ENCODE measurements at regions of chr11 and their contacts with region 1.

Region 1: DNA sequence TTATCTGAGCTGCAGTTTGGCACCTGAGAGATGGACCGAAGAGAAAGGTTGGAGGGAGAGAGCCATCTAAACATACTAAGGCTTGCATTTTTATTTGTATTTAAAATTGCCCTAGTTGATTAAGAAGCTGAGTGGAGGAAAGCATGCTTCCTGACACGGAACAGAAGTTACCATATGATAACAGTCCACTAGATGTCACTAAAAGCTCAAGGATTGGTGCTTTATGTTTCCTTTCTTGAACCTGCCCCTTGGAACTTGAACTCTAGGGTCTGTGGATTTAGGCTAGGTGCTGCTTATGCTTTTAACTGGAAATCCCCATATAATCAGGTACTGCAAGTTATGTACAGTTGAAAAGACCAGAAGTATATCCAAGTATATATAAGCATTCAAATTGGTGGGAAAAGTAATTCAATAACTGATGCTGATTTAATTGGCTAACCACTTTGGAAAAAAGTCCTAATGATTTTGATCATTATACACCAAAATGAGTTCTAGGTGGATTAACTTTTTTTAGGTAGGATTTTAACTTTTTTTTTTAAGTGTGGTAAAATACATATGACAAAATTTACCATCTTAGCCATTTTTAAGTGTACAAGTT is 9.5 kb downstream of the RBMXL2 start:
- DNase-seq: peak; percentile 46 to 67 (median 56)
- ATAC-seq: peak; percentile 93
- H3K4me3 ChIP-seq: no peak overlapping the region
- H3K27ac ChIP-seq: no peak overlapping the region
- H3K4me1 ChIP-seq: no peaks in the 10 kb centered on the region
- H3K27me3 ChIP-seq: no peaks in the 10 kb centered on the region
- CTCF ChIP-seq: peak; percentile 63 to 87 (median 65); a peak in 5 of 6 replicates
- EP300 ChIP-seq: no peak
- POLR2A ChIP-seq: no peak
- RAD21 ChIP-seq: peak; percentile 91

Region 2: DNA sequence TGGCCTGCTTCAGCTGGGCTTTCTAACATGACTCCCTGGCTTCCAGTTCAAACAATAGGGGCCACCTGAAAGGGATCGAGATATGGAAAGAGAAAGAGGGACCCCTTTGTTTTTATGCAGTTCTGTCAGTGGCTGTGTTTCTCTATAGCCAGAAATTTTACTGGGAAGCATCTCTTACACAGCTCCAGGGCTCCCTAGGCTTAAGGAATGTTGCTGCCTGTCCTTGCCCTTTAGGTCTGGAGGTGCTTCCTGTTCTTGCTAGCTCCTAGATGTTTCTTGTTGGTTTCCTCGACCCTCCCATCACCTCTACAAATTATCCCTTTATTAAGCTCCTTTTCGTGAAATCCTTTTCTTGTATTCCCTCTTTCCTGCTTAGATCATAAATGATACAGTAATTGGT is 1046.0 kb before region 1 on chr11:
- CTCF ChIA-PET with region 1: no interaction called
- POLR2A ChIA-PET with region 1: no interaction called
- in situ Hi-C with region 1: no loop called
- intact Hi-C with region 1: no loop called
- DNase-seq: no peak
- ATAC-seq: no peak
- H3K4me3 ChIP-seq: no peak overlapping the region
- H3K27ac ChIP-seq: no peak overlapping the region
- H3K4me1 ChIP-seq: no peaks in the 10 kb centered on the region
- H3K27me3 ChIP-seq: peaks cover 0 to 3% of the 10 kb centered on the region in 2 experiments; a peak in 3 of 5 replicates
- CTCF ChIP-seq: no peak
- EP300 ChIP-seq: no peak
- POLR2A ChIP-seq: no peak
- RAD21 ChIP-seq: no peak

Region 3: DNA sequence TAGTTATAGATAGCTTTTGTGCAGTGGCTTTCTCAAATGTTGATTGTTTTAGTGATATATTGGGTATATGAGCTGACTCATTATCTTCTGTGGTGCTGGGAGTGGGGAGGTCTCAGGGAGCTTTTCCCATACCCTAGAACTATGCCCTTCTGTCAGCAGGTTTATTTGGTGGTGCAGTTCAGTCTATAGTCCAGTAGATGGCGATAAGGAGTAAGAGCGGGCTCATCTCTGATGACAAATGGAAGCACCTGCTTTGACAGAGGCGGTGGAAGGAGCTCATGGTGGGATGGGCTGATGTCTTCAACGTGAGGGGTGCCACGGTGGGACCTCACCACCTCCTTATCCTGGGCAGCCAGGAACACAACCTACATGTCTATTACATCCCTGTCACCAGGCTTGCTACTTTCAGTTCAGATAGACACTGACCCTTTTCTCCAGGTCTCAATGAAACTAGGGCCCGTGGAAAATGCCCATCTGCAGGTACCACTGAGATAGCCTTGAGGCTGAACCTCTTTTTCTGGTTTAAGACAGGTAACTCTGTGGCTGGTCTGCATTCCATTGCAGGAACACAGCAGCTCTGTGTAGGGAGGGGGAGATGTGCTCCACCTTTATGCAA is 285.8 kb before region 1 on chr11:
- CTCF ChIA-PET with region 1: no interaction called
- POLR2A ChIA-PET with region 1: no interaction called
- in situ Hi-C with region 1: no loop called
- intact Hi-C with region 1: loop called (anchors 10 kb)
- DNase-seq: peak; percentile 58 to 72 (median 61)
- ATAC-seq: peak; percentile 94
- H3K4me3 ChIP-seq: no peak overlapping the region
- H3K27ac ChIP-seq: no peak overlapping the region
- H3K4me1 ChIP-seq: no peaks in the 10 kb centered on the region
- H3K27me3 ChIP-seq: no peaks in the 10 kb centered on the region; a peak in 1 of 5 replicates
- CTCF ChIP-seq: peak; percentile 78 to 87 (median 86)
- EP300 ChIP-seq: no peak
- POLR2A ChIP-seq: no peak
- RAD21 ChIP-seq: peak; percentile 43 to 72

Region 4: GRCh38 chr11:7020183-7020917 is 78.0 kb before region 1 on chr11 and contains the starts of genes NLRP14 and ZNF214:
- CTCF ChIA-PET with region 1: no interaction called
- POLR2A ChIA-PET with region 1: no interaction called
- in situ Hi-C with region 1: no loop called
- intact Hi-C with region 1: no loop called
- DNase-seq: peak; percentile 59 to 69 (median 64)
- ATAC-seq: peak; percentile 91
- H3K4me3 ChIP-seq: peak within 1 kb of the TSS; percentile 9
- H3K27ac ChIP-seq: no peak within 1 kb of the TSS
- H3K4me1 ChIP-seq: peaks cover 0 to 11% of the 10 kb centered on the region in 2 experiments; a peak in 3 of 5 replicates
- H3K27me3 ChIP-seq: no peaks in the 10 kb centered on the region
- CTCF ChIP-seq: no peak
- EP300 ChIP-seq: no peak
- POLR2A ChIP-seq: no peak
- RAD21 ChIP-seq: no peak
- polyA plus RNA-seq, gene NLRP14: 0.27 to 0.36 TPM
- polyA plus RNA-seq, gene ZNF214: 0.06 to 0.11 TPM

Region 5: DNA sequence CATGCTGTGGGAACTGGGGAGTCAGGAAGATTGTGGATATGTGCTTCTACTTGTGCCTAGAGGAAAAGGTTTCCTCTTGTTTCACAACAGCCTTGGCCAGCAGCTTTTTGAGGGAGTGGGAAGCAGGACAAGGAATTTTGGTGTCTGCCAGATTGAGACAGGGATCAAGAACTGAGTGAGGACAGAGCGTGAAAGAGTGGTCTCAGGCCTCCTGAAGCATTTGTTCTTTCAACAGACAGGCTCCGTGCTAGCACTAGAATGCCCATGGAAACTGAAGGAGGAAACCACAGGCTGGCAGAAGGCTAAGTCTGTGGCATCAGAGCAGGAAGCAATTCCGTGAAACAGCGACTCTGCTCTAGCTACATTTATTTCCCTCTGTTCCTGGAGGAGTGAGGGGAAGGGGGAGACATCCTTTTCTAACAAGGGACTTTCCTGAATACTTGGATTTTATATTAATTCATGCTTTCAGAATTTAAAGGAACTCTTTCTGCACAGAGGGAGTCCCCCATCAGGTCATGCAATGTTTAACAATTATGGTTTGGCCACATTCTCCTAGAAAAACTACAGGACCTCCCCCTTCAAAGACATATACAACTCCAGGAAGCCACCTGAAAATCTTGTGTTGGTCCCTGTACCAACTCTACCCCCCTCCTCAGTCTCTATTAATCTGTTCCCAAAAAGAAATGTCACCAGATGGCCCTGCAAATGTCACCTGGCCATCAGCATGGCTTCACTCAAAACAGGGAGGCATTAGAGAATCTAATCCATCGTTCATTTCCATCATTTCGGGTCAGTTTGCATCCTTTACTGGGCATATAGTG is 249.5 kb after region 1 on chr11:
- CTCF ChIA-PET with region 1: no interaction called
- POLR2A ChIA-PET with region 1: no interaction called
- in situ Hi-C with region 1: no loop called
- intact Hi-C with region 1: no loop called
- DNase-seq: no peak
- ATAC-seq: no peak
- H3K4me3 ChIP-seq: no peak overlapping the region
- H3K27ac ChIP-seq: no peak overlapping the region
- H3K4me1 ChIP-seq: no peaks in the 10 kb centered on the region
- H3K27me3 ChIP-seq: no peaks in the 10 kb centered on the region; a peak in 1 of 5 replicates
- CTCF ChIP-seq: no peak
- EP300 ChIP-seq: no peak
- POLR2A ChIP-seq: no peak
- RAD21 ChIP-seq: no peak

Region 6: GRCh38 chr11:7442588-7443215 is 344.4 kb after region 1 on chr11:
- CTCF ChIA-PET with region 1: interaction called, 3 read pairs
- POLR2A ChIA-PET with region 1: no interaction called
- in situ Hi-C with region 1: loop called (anchors 10 kb)
- intact Hi-C with region 1: loop called (anchors 1 kb)
- DNase-seq: peak; percentile 59 to 75 (median 68)
- ATAC-seq: peak; percentile 93
- H3K4me3 ChIP-seq: no peak overlapping the region
- H3K27ac ChIP-seq: no peak overlapping the region
- H3K4me1 ChIP-seq: no peaks in the 10 kb centered on the region
- H3K27me3 ChIP-seq: no peaks in the 10 kb centered on the region; a peak in 1 of 5 replicates
- CTCF ChIP-seq: peak; percentile 71 to 83 (median 83)
- EP300 ChIP-seq: no peak
- POLR2A ChIP-seq: no peak
- RAD21 ChIP-seq: peak; percentile 79 to 86

Region 7: DNA sequence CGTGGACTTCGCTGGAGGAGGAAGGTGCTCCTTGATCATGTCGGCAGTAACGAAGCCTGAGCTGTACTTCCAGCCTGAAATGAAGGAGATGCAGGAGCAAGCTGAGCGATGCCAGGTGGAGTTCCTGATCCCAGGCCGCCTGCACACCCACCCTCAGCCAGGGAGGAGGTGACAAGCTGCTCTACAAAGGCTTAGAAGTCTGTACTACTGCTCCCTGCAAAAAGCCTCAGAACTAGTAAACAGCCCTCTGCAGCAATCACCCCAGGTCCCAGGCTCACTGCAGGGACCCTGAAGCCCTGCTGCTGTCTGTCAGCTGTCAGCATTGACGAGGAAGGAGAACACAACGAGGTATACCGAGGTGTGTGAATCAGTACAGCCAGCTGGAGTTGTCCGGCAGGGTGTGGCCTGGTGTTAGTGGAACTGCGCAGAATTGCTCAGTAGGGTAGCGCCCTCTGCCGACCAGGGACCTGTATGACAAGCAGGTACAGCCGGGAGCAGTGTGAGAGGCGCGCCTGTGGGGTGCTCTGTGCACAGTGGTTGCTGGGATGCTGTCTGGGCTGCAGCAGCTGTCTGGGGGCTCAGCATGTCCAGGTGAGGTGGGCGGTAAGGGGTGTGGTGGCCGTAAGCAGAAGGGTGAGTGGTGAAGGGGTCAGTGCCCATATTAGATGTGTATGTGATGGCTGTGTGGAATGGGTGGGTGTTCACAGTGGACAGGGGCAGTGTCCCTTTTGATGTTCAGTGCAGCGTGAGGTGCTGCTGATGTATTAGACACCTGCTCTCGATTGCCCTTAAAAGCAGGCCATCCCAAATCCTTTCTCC is 567.3 kb after region 1 on chr11:
- CTCF ChIA-PET with region 1: interaction called, 6 read pairs
- POLR2A ChIA-PET with region 1: no interaction called
- in situ Hi-C with region 1: loop called (anchors 25 kb)
- intact Hi-C with region 1: no loop called
- DNase-seq: peak; percentile 82 to 89 (median 87)
- ATAC-seq: peak; percentile 100
- H3K4me3 ChIP-seq: no peak overlapping the region
- H3K27ac ChIP-seq: no peak overlapping the region
- H3K4me1 ChIP-seq: no peaks in the 10 kb centered on the region
- H3K27me3 ChIP-seq: no peaks in the 10 kb centered on the region
- CTCF ChIP-seq: peak; percentile 90 to 92 (median 90)
- EP300 ChIP-seq: no peak
- POLR2A ChIP-seq: no peak
- RAD21 ChIP-seq: peak; percentile 78

Region 8: DNA sequence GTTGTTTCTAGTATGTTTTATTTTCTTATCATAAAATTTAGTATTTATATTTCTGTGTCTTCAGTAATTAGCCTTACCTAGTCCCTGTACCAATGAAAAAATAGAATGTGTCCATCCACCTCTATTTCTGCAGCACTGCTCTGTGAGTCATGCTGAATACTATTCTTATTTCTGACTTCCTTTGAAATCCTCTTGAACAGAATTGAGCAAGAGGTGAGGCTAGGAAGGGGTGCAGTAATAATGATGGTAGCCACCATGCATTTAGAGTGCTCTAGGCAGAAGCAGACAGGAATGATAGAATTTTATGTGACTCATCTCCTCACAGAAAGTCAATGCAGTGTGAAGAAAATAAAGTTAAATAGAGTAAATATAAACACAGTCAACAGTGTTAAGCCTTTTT is 772.7 kb after region 1 on chr11:
- CTCF ChIA-PET with region 1: no interaction called
- POLR2A ChIA-PET with region 1: no interaction called
- in situ Hi-C with region 1: loop called (anchors 10 kb)
- intact Hi-C with region 1: no loop called
- DNase-seq: no peak
- ATAC-seq: no peak
- H3K4me3 ChIP-seq: no peak overlapping the region
- H3K27ac ChIP-seq: no peak overlapping the region
- H3K4me1 ChIP-seq: no peaks in the 10 kb centered on the region
- H3K27me3 ChIP-seq: no peaks in the 10 kb centered on the region
- CTCF ChIP-seq: no peak
- EP300 ChIP-seq: no peak
- POLR2A ChIP-seq: no peak
- RAD21 ChIP-seq: no peak